Activated CD8-positive, alpha-beta memory T cell treated with anti-CD3 and anti-CD28 coated beads, Interleukin-2, amount 10 ng/mL, durations not matched to agents 7 days and 5 days (primary cell): ENCODE measurements at regions of chr1 and their contacts with region 1.

Region 1: DNA sequence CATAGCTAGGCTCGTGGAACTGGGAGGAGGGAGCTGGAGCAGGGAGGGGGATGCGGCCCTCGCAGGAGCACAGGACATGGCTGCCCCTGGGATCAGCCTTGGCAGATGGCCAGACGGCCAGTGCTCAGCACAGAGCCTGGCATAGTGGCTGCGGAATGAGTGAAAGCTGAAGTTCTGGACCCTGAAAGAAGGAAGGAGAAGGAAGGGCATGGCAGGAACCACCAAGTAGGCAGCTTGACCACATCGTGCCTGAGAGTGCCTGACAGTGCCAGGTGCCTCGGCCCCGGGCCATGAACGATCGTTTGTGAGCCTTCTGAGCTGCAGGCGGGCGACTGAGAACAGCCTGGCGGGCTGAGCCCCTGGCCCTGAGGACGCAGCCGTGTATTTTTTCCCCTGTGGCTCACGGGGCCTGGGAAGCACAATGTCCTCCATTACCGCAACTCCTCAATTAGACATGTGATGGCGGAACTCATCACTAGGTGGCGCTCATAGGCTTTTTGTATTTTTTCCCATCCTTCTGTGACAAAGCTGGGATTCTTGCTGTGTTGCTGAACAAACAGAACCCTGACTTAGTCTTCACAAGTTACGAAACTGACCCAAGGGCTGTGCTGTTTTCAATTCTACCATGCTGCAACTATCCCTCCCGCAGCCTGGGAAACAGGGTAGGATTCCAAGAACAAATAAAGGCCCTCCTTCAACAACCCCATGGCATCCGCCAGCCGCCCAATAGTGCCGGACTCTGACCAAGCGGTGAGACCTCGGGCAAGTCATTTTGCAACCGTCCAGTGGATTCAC is 29.9 kb upstream of the TMEM61 start:
- DNase-seq: peak; percentile 73
- ATAC-seq: peak; percentile 71
- H3K4me3 Mint-ChIP-seq: no peak overlapping the region
- H3K27ac Mint-ChIP-seq: peak overlapping the region; percentile 44
- H3K4me1 Mint-ChIP-seq: peaks cover 37% of the 10 kb centered on the region
- H3K27me3 Mint-ChIP-seq: peaks cover 6% of the 10 kb centered on the region

Region 2: DNA sequence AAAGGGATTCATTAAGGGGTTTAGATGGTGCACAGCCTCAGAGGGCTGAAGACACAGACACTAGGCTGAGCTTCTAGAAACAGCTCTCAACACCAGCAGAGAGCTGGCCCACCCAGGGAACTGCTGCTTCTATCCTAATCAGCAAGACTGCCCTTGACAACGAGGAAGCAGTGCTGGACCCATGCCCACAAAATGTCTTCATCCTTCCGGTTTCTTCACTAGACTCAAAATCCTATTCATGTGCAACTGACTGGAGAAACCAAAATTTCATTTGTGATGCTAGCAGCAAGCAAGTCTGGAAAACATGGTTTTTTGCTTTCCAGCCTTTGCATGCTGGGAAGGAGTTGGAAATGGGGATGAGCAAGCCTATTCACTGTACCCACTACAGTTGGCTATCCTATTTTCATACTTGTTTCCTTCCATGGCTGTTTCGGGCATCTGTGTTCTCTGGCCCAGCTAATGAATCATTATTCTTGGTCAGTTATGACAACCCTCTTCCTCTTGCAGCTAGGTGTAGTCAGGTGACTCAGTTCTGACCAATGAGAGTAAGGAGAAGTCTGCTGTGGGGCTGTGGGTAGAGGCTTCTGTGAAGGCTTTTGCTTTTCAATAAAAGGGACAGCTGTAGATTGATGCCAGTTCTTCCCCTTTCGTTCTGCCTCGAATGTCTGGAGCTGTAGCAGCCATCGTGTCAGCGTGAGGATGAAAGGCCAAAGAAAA is 15.2 kb after region 1 on chr1:
- CTCF ChIA-PET with region 1: interaction called, 15 read pairs
- DNase-seq: no peak
- ATAC-seq: peak; percentile 75
- H3K4me3 Mint-ChIP-seq: no peak overlapping the region
- H3K27ac Mint-ChIP-seq: peak overlapping the region; percentile 30
- H3K4me1 Mint-ChIP-seq: peaks cover 33% of the 10 kb centered on the region
- H3K27me3 Mint-ChIP-seq: peaks cover 21% of the 10 kb centered on the region

Region 3: DNA sequence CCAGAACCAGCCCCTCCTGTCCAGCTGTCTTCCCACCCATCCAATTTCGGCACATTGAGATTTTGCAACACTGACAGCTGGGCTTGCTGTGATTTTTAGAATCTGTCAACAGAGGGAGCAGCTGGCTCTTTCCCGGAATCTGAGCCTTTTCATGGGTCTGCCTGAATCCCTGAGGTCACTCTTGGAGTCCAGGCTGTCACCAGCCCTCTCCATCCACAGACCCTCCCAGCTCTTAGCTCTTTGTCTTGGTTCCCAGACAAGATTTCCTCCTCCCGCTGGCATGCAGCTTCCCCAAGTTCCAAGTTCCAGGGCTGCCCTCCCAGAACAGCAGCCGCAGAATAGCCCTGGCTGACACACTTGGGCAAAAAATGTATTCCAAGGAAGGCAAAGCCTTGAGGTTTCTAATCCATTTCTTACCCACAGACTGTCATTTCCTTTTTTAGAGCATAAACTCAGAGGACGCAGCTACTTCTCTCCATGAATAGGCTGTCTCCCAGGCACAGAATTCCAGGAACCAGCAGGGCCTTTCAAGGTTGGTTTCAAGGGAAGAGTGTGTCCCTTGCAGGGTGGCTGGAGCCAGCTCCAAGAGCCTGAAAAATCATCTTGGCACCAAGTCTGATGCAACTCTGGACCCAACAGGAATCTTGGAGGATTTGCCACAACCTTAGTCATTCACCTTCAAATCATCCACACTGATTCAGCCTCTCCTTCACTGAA is 22.8 kb after region 1 on chr1:
- CTCF ChIA-PET with region 1: interaction called, 15 read pairs
- DNase-seq: no peak
- ATAC-seq: no peak
- H3K4me3 Mint-ChIP-seq: no peak overlapping the region
- H3K27ac Mint-ChIP-seq: no peak overlapping the region
- H3K4me1 Mint-ChIP-seq: peaks cover 13% of the 10 kb centered on the region
- H3K27me3 Mint-ChIP-seq: peaks cover 53% of the 10 kb centered on the region

Region 4: GRCh38 chr1:54987919-54988705 is 37.5 kb after region 1 on chr1:
- CTCF ChIA-PET with region 1: interaction called, 44 read pairs
- DNase-seq: no peak
- ATAC-seq: no peak
- H3K4me3 Mint-ChIP-seq: no peak overlapping the region
- H3K27ac Mint-ChIP-seq: no peak overlapping the region
- H3K4me1 Mint-ChIP-seq: peaks cover 7% of the 10 kb centered on the region
- H3K27me3 Mint-ChIP-seq: peaks cover 18% of the 10 kb centered on the region

Region 5: DNA sequence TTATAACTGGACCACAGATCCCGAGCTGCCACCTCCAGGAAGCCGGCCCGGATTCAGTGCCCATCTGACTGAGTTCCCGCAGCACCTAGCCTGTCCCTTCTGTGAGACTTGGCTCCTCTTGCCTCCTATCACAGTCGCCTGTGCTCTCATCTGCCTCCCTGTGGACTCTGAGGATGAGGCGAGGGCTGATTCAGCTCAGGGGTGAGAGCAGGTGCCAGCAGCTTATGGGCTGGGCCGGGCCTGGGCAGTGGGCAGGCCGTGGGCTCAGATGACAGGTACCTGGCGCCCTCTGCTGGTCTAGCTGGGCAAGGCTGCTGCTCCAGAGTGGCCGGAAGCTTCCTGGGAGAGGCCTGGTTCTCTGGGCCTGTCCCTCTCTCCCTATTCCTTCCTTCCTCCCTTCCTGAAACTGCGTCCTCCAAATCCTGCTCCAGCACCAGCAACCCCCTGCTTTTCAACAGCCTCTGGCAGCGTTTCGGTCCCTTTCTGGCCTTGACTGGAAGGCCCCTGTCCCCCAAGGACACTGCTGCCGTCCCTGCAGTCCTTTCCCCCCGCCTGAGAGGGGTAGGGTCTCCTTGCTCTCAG is 71.5 kb after region 1 on chr1:
- CTCF ChIA-PET with region 1: interaction called, 78 read pairs
- DNase-seq: peak; percentile 80
- ATAC-seq: peak; percentile 98
- H3K4me3 Mint-ChIP-seq: no peak overlapping the region
- H3K27ac Mint-ChIP-seq: no peak overlapping the region
- H3K4me1 Mint-ChIP-seq: peaks cover 3% of the 10 kb centered on the region
- H3K27me3 Mint-ChIP-seq: peaks cover 15% of the 10 kb centered on the region